Posterior cingulate gyrus (tissue), 11 donors: ENCODE measurements at regions of chr19 and their contacts with region 1.

Region 1: DNA sequence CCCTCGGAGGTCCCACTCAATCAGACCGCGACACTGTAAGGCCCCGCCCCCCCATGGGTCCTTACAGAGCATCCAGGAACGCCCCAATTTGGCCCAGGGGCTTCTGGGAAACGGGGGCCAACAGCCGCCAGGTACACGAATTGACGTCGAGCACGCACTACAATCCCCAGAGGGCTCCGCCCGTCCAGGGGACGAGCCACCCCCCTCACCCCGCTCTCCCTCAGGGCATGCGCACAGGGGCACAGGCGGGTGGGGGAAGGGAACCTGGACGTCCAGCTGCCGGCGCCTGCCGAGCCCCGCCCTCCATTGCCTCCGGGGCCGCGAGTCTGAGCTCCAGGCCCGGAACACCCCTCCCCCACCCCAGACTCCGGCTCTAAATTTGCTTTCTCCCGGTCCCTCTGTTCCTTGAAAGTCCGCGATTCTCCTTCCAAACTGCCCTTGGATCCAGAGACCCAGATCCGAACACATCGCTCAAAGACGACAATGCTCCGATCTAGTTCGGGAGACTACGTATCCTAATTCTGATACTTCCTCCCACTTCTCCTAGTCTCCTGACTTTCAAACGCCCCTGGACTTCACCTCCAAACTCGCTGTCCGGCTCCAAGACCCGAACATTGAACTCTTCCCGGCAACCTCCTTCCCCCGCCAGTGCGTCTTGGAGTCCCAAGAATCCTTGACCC is 864 bp downstream of the SERTAD3 start:
- DNase-seq: peak; percentile 92 to 100 (median 97)

Region 2: GRCh38 chr19:40403262-40403984 is 39.8 kb before region 1 on chr19:
- intact Hi-C with region 1: no loop called
- DNase-seq: peak in 7 of 10 donors; percentile 35 to 91 (median 41)

Region 3: DNA sequence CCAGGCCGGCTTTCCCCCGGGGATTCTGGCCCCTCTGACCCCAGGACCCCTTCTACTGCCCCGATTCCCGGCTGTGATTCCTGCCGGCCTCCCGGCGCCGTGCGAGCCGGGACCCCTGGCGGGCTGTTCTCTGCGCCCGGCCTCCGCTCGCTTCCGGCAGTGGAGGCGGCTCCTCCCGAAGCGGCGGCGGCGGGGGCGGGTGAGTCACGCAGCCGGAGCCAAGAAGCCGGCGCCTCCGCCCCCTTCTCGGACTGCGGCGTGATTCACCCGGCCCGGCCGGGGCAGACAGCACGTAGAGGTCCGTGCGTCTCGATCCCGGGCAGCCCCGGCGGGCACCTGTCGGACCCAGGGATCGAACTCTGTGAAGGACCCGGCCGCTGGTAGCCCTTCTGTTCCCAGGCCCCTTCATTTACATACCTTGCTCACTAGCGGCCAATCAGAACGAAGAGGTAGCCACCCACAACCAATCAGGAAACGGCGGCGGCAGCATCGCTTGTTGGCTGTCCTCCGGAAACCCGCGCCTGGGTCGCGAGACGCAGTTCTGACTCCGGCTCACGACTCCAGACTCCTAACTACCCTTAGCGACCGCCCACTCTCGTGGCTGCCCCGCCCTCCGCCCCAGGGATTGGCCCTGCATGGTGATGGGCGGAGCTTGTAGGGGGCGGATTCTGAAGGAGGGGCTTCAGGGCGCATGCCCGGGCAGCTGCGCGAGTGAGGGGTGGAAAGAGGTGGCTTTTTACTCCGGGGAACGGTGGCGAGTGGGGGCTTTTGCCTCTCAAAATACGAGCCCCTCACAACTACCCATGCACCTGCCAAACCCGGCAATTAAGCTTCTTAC is 17.6 kb before region 1 on chr19 and contains the start of gene SERTAD1:
- intact Hi-C with region 1: loop called (anchors 1 kb)
- DNase-seq: peak; percentile 100

Region 4: DNA sequence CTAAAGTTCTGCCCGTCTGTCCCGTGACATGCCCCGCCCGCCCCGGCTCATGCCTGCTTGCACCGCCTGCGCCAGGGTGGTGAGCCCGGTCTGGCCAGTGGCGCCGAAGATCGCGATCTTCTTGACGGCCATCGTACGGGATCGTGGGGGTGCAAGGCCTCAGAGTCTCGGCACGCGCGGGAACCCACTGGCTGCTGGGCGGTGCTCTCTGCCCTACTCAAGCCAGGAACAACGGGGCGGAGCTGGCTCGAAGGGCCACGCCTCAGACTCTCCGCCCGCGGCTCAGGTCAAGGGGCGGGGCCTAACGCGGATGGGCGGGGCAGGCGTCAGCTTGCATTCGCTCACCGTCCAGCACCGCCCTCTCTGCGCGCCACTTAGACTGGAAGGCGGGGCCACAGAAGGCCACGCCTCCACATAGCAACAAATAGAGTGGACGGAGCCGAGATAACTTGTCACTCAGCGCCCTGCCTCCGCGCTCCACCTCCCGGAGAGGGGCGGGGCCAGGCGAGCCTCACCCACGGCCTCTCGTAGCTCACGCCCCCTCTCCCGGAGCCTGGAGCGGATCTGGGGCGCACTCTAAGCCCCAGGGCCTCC is 22.4 kb after region 1 on chr19 and contains the start of gene BLVRB:
- intact Hi-C with region 1: loop called (anchors 1 kb)
- DNase-seq: peak; percentile 99 to 100 (median 100)

Region 5: DNA sequence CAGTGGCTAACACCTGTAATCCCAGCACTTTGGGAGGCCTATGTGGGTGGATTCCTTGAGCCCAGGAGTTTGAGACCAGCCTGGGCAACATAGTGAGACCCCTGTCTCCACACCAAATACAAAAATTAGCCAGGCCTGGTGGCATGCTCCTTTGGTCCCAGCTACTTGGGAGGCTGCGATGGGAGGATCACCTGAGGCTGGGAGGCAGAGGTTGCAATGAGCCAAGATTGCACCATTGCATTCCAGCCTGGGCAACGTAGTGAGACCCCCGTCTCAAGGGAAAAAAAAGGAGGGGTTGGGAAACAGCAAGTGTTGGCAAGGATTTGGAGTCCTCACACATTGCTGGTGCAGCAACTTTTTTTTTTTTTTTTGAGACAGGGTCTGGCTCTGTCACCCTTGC is 42.7 kb after region 1 on chr19:
- intact Hi-C with region 1: no loop called
- DNase-seq: peak in 1 of 10 donors; percentile 2